ENCODE measurements at regions of chr11 and their contacts with region 1.

Region 1: GRCh38 chr11:77047007-77047927 is 13.1 kb downstream of the B3GNT6 start:
- DNase-seq: peak; percentile 61
- H3K4me3 ChIP-seq: peak overlapping the region; percentile 7 to 51 (median 32)
- H3K27ac ChIP-seq: peak overlapping the region in 1 of 4 donors; percentile 38
- H3K4me1 ChIP-seq: peaks cover 5 to 15% (median 10%) of the 10 kb centered on the region in 3 donors
- H3K27me3 ChIP-seq: peaks cover 0 to 35% (median 0%) of the 10 kb centered on the region in 4 donors
- CTCF ChIP-seq: peak; percentile 55 to 82 (median 70)
- POLR2A ChIP-seq: no peak

Region 2: DNA sequence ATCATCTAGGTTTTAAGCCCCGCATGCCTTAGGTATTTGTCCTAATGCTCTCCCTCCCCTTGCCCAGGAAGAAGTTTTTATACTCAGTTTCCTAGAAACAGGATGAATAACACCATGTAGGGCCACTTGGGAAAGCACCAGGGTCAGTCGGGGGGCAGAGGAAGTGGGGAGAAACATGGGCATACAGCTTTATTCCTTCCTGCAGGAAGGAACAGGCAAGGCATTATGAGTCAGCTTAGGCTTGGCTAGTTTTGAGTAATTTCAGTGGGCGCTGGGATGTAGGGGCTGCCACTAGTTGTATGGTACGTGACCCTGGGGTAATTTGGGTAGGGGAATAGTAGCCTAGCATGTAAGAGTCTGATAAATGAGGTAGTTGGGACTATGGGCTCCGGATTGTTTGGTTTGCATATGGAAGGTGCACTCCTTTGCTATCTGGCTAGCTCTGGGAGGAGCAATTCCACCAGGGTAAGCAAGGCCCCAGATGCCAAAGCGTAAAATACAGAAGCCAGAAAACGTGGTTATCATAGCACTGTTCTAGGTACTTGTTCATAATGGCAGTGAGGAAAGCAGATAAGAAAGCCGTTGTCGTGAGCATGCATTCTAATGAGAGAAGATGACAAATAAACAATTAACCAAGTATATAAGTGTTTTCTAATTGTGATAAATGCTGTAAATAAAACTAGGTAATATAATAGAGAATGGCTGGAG is 161.7 kb before region 1 on chr11:
- intact Hi-C with region 1: no loop called
- DNase-seq: no peak
- H3K4me3 ChIP-seq: no peak overlapping the region
- H3K27ac ChIP-seq: no peak overlapping the region
- H3K4me1 ChIP-seq: peaks cover 0 to 13% (median 12%) of the 10 kb centered on the region in 3 donors
- H3K27me3 ChIP-seq: no peaks in the 10 kb centered on the region
- CTCF ChIP-seq: no peak
- POLR2A ChIP-seq: no peak

Region 3: DNA sequence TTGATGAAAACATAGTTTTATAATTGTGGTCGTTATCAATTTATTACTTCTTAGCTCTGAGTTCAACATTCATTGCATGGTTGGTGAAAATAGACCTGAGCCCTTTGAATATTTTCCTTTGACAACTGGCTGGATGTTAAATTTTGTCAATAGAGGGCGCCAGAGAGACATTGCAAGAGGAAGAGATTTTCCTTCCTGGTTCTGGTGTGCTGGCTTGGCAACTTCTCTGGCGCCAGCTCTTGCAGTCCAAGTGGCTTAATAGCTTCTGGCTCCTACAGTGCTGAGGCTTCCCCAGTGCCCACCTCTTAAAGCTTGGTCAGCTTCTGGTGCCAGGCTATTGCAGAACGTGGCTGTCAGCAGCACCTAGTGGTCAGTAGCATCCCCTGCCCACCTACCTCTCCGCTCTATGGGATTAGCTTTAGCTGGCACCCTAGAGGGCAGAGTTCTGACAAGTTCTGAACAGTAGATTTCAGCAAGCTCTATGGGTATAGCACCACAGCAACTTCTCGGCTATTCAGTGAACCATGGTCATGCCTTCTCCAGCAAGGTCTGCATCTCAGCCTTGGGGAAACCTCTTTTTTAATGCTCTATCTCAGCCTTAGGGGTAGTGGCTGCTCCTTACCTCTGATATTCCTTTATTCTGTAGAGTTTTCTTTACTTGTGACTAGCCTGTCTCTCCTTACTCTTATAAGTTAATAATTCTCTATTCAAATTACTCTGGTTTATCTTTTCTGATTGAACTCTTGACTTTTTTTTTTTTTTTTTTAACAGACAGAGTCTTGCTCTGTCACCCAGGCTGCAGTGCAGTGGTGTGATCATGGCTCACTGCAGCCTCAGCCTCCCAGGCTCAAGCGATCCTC is 127.2 kb before region 1 on chr11:
- intact Hi-C with region 1: loop called (anchors 10 kb)
- DNase-seq: peak; percentile 21
- H3K4me3 ChIP-seq: peak overlapping the region in 1 of 4 donors; percentile 35
- H3K27ac ChIP-seq: peak overlapping the region in 2 of 4 donors; percentile 3 to 14
- H3K4me1 ChIP-seq: peaks cover 3 to 20% (median 4%) of the 10 kb centered on the region in 3 donors
- H3K27me3 ChIP-seq: no peaks in the 10 kb centered on the region
- CTCF ChIP-seq: peak; percentile 81 to 95 (median 88)
- POLR2A ChIP-seq: no peak

Region 4: DNA sequence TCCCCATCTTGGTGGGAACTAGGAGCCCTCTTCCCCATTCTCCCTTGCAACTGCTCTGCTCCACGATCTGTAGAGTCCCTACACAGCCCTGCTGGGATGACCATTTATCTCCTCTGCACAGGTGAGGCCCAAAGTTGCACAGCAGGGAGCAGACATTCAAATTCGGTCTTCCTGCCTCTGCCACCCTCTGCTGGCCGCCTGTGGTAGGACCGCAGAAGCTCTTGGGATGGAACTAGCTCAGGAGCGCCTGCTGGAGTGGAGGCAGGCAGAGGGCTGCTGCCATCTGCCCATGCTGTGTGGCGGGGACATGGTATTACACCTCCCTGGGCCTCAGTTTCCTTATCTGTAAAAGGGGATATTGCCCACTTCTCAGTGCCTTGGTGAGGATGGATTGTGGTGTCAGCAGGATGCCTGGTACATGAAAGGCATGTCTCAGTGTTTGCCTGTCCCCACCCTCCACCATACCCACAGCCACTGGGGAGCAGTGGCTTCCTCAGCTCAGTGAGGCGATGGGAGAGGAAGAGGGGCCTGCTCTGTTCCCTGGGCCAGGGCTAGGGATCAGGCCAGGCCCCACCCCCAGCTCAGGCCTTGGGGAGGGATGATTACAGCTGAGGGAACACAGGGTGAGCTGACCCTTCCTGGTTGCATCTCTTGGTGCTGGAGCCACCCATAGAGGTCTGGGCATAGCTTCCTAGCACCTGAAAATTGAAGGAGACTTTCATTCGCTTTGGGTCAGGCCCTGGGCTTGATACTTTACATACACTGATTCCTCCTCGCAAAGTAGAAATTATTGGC is 44.1 kb after region 1 on chr11:
- intact Hi-C with region 1: loop called (anchors 2 kb)
- DNase-seq: no peak
- H3K4me3 ChIP-seq: no peak overlapping the region
- H3K27ac ChIP-seq: no peak overlapping the region
- H3K4me1 ChIP-seq: peaks cover 11 to 53% (median 14%) of the 10 kb centered on the region in 3 donors
- H3K27me3 ChIP-seq: no peaks in the 10 kb centered on the region
- CTCF ChIP-seq: peak in 5 of 6 experiments; percentile 91 to 96 (median 94)
- POLR2A ChIP-seq: no peak